ENCODE measurements at regions of chr5 and their contacts with region 1.

Region 1: GRCh38 chr5:84549054-84549453 is 164.4 kb upstream of the EDIL3 start:
- DNase-seq: no peak
- ATAC-seq: no peak
- H3K4me3 ChIP-seq: no peak overlapping the region
- H3K4me3 Mint-ChIP-seq: no peak overlapping the region
- H3K27ac ChIP-seq: no peak overlapping the region
- H3K27ac Mint-ChIP-seq: no peak overlapping the region
- H3K4me1 ChIP-seq: no peaks in the 10 kb centered on the region
- H3K4me1 Mint-ChIP-seq: no peaks in the 10 kb centered on the region
- H3K27me3 ChIP-seq: no peaks in the 10 kb centered on the region
- H3K27me3 Mint-ChIP-seq: no peaks in the 10 kb centered on the region
- CTCF ChIP-seq: no peak

Region 2: DNA sequence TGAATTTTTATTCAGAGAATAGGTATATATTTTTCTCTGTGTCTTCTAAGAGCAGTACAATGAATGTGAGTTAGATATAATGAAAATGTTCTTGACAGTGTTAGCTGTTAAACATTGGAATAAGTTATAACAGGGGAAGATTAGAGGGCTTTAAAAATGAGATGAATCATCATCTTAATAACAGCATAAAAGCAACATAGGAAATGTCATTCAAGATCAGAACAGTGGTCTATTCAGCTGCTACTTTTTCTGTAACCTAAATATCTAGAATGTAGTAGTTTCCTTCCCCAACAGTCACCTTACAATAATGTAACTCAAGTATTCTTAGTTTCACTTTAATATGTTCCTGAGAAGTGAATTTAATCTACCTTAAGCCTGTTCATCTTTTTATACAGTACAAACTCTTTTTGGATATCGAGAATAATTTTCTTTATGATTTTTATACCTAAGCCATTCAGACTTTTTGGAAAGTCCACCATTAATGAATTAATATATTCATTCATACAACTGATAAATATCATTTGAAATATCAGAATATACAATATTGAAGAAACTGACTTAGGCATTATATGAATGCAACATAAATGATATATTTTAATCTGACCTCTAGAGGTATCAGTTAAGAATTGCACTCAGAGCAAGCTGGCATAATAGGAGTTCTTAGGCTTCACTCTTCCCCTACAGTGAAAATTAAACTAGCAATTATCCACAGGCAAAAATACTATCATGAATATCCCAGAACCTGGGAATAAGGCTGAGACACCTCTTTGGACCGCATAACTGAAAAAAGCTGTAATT is 98.2 kb before region 1 on chr5:
- CTCF ChIA-PET with region 1: no interaction called
- POLR2A ChIA-PET with region 1: no interaction called
- intact Hi-C with region 1: no loop called
- DNase-seq: no peak
- ATAC-seq: no peak
- H3K4me3 ChIP-seq: no peak overlapping the region
- H3K4me3 Mint-ChIP-seq: no peak overlapping the region
- H3K27ac ChIP-seq: no peak overlapping the region
- H3K27ac Mint-ChIP-seq: no peak overlapping the region
- H3K4me1 ChIP-seq: no peaks in the 10 kb centered on the region
- H3K4me1 Mint-ChIP-seq: no peaks in the 10 kb centered on the region
- H3K27me3 ChIP-seq: no peaks in the 10 kb centered on the region
- H3K27me3 Mint-ChIP-seq: no peaks in the 10 kb centered on the region
- CTCF ChIP-seq: no peak

Region 3: GRCh38 chr5:84535281-84535680 is 13.8 kb before region 1 on chr5:
- CTCF ChIA-PET with region 1: no interaction called
- POLR2A ChIA-PET with region 1: no interaction called
- intact Hi-C with region 1: loop called in 1 of 2 experiments (anchors 1 kb)
- DNase-seq: no peak
- ATAC-seq: no peak
- H3K4me3 ChIP-seq: no peak overlapping the region
- H3K4me3 Mint-ChIP-seq: no peak overlapping the region
- H3K27ac ChIP-seq: no peak overlapping the region
- H3K27ac Mint-ChIP-seq: no peak overlapping the region
- H3K4me1 ChIP-seq: no peaks in the 10 kb centered on the region
- H3K4me1 Mint-ChIP-seq: no peaks in the 10 kb centered on the region
- H3K27me3 ChIP-seq: no peaks in the 10 kb centered on the region
- H3K27me3 Mint-ChIP-seq: no peaks in the 10 kb centered on the region
- CTCF ChIP-seq: no peak

Region 4: DNA sequence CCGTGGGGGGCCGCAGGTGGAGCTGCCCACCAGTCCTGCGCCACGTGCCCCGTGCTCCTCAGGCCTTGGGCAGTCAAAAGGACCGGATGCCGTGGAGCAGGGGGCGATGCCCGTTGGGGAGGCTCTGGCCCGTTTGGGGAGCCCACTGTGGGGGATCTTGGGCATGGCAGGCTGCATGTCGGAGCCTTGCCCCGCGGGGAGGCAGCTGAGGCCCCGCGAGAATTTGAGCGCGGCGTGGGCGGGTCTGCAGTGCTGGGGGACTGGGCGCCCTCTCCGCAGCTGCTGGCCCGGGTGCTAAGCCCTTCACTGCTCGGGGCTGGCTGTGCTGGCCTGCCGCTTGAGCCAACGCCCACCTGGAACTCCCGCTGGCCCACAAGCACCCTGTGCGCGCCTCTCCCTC is 281.2 kb after region 1 on chr5:
- CTCF ChIA-PET with region 1: no interaction called
- POLR2A ChIA-PET with region 1: no interaction called
- intact Hi-C with region 1: no loop called
- DNase-seq: peak in 1 of 14 experiments; percentile 11
- ATAC-seq: no peak
- H3K4me3 ChIP-seq: no peak overlapping the region
- H3K4me3 Mint-ChIP-seq: no peak overlapping the region
- H3K27ac ChIP-seq: no peak overlapping the region
- H3K27ac Mint-ChIP-seq: no peak overlapping the region
- H3K4me1 ChIP-seq: no peaks in the 10 kb centered on the region
- H3K4me1 Mint-ChIP-seq: no peaks in the 10 kb centered on the region
- H3K27me3 ChIP-seq: no peaks in the 10 kb centered on the region
- H3K27me3 Mint-ChIP-seq: no peaks in the 10 kb centered on the region
- CTCF ChIP-seq: no peak

Measured in CD4-positive, alpha-beta T cell (primary cell).